ENCODE measurements at regions of chr11 and their contacts with region 1.

Region 1: DNA sequence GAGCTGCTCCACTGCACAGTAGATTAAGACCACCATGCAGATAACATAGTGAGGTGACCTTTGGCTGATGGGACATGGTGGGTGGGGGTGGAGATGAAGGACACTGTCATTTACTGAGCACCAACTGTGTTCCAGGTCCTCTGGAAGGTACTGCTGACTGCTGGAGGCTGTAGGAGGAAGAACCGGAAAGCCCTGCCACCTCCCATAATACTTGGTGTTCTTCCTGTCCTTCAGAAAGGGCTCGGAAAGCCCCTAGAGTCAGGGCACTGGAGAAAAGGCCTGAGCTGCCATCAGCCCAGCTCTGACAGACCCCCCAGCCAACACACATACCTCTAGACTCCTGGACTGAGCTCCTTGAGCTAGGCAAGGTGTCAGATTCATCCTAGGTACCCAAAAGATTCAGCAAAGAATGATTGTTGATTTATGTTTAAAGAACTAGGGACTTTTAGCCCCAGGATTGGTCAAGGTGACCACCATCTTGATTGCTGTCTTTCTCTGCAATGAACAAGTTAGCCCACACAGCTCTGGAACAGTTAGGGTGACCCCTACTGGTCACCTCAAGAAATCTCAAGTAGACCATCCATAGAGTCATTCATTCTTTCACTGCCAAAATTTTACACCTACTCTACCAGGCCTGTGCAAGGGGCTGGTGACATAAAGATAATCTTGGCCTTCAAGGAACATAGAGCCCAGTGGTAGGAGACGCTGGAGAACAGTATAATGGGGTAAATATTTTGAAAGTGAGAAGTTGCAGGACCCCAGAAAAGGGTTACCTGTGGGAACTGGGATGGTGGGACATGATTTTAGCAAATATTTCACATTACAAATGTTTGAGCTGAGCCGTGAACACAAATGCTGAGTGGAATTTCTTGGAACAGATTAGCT is 39.4 kb downstream of the IRAG1 start:
- DNase-seq: no peak
- ATAC-seq: peak; percentile 68 to 74 (median 73)
- H3K4me3 ChIP-seq: no peak overlapping the region
- H3K27ac ChIP-seq: peak overlapping the region in 6 of 12 donors; percentile 10 to 77 (median 59)
- H3K4me1 ChIP-seq: peaks cover 3 to 66% (median 22%) of the 10 kb centered on the region in 12 donors
- H3K27me3 ChIP-seq: no peaks in the 10 kb centered on the region
- CTCF ChIP-seq: peak; percentile 49 to 81 (median 68)
- POLR2A ChIP-seq: no peak

Region 2: DNA sequence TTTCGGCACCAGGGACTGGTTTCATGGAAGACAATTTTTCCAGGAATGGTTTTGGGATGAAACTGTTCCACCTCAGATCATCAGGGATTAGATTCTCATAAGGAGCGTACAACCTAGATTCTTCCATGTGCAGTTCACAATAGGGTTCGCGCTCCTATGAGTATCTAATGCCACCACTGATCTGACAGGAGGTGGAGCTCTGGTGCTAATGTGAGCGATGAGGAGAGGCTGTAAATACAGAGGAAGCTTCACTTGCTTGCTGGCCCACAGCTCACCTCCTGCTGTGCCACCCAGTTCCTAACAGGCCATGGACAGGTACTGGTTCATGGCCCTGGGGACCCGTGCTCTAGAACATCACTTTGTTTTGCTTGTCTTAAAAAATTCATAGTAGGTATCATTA is 240.9 kb before region 1 on chr11:
- intact Hi-C with region 1: loop called in 9 of 10 experiments (anchors 2 to 10 kb)
- DNase-seq: peak in 1 of 5 donors; percentile 52
- ATAC-seq: peak in 3 of 4 donors; percentile 51 to 59 (median 53)
- H3K4me3 ChIP-seq: no peak overlapping the region
- H3K27ac ChIP-seq: peak overlapping the region in 2 of 12 donors; percentile 48 to 84
- H3K4me1 ChIP-seq: peaks cover 0 to 35% (median 2%) of the 10 kb centered on the region in 12 donors
- H3K27me3 ChIP-seq: no peaks in the 10 kb centered on the region
- CTCF ChIP-seq: peak in 5 of 12 donors; percentile 10 to 21 (median 12)
- POLR2A ChIP-seq: no peak

Region 3: DNA sequence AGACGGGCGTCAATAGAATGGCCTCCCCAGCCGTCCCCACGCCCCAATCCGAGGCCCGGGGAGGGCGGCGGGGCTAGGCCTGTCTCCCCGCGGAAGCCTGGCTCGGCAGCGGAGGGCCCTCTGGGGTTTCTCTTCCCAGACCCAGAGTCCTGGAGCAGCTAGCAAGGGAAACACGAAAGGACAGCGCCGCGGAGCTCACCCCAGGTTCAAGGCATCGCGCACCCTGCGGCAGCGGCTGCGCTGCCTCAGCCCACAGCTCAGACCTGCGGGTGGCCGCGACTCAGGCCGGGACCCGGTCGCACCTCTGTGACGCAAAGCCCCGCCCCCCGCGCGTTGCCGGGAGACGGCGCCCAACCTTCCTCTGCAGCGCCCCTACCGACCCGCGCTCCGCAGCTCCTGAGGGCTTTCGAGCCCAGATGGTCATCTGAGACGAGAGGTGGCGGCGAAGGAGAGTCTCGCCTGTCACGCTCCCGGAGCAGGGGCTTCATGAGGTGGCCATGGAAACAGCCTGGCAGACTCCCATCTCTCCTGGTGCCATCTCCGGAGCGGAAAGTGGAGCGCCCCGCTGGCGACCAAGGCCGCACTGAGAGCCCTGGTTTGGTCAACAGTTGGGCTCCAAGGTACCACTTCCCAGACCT is 113.1 kb before region 1 on chr11 and contains the start of gene RNF141:
- intact Hi-C with region 1: loop called in 3 of 10 experiments (anchors 10 kb)
- DNase-seq: peak; percentile 95 to 98 (median 96)
- ATAC-seq: peak; percentile 98 to 100 (median 100)
- H3K4me3 ChIP-seq: peak within 1 kb of the TSS; percentile 69 to 94 (median 80)
- H3K27ac ChIP-seq: peak within 1 kb of the TSS; percentile 35 to 94 (median 87)
- H3K4me1 ChIP-seq: peaks cover 0 to 28% (median 7%) of the 10 kb centered on the region in 12 donors
- H3K27me3 ChIP-seq: no peaks in the 10 kb centered on the region
- CTCF ChIP-seq: peak; percentile 70 to 94 (median 86)
- POLR2A ChIP-seq: peak in 1 of 2 donors; percentile 88
- total RNA-seq, gene RNF141: 18.8 to 42.8 (median 36.5) TPM

Region 4: GRCh38 chr11:10694481-10695239 is 40.5 kb after region 1 on chr11:
- intact Hi-C with region 1: loop called in 1 of 10 experiments (anchors 5 kb)
- DNase-seq: no peak
- ATAC-seq: no peak
- H3K4me3 ChIP-seq: no peak overlapping the region
- H3K27ac ChIP-seq: peak overlapping the region in 6 of 12 donors; percentile 20 to 89 (median 79)
- H3K4me1 ChIP-seq: peaks cover 0 to 35% (median 6%) of the 10 kb centered on the region in 12 donors
- H3K27me3 ChIP-seq: no peaks in the 10 kb centered on the region
- CTCF ChIP-seq: no peak
- POLR2A ChIP-seq: no peak

Region 5: DNA sequence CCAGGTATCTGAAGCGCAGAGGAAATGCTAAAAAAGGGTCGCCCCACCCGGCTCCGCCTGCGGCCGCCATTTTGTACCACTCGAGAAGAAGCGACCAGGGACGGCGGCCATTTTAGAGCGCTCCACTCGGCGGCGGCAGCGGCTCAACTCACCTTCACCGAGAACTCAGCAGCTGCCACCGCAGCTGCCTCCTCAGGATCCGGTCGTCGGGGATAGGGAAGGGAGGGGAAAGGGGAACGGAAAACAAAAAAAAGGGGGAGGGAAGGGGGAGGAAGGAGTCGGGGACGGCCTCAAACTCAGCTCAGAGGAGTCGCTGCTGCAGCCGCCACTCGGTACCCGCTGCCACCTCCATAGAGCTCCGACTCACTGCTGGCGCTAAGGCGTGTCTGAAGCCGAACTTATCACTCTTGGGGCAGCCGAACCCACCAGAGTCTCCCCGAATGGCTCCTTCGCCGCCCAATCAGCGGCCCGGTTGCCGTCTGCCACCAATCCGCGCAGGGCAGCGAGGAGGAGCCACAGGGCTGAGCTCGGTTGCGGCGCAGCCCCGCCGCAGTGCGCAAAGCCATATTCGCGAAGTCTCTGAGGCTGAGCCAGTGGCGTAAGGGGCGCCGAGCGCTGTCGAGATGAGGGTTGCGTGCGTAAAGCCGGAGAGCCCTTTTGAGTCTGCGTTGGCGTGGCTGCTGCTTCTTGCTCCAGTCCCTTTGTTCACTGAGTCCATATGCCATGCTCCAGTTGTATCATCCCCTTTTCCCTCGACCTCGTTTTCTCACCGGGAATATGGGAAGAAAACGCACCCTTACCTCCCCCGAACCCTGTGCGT is 154.6 kb after region 1 on chr11 and contains the start of gene EIF4G2:
- intact Hi-C with region 1: no loop called
- DNase-seq: peak; percentile 99
- ATAC-seq: peak; percentile 95 to 98 (median 98)
- H3K4me3 ChIP-seq: peak within 1 kb of the TSS; percentile 61 to 99 (median 93)
- H3K27ac ChIP-seq: peak within 1 kb of the TSS; percentile 94 to 100 (median 98)
- H3K4me1 ChIP-seq: peaks cover 15 to 46% (median 40%) of the 10 kb centered on the region in 12 donors
- H3K27me3 ChIP-seq: no peaks in the 10 kb centered on the region
- CTCF ChIP-seq: peak in 2 of 12 donors; percentile 12 to 25
- POLR2A ChIP-seq: peak; percentile 82 to 99
- total RNA-seq, gene EIF4G2: 473 to 1,111 (median 849) TPM